Posterior cingulate gyrus (tissue), 11 donors: ENCODE measurements at regions of chr6 and their contacts with region 1.

Region 1: GRCh38 chr6:44246663-44247337 is at the start of gene HSP90AB1:
- DNase-seq: peak; percentile 91 to 99 (median 93)

Region 2: DNA sequence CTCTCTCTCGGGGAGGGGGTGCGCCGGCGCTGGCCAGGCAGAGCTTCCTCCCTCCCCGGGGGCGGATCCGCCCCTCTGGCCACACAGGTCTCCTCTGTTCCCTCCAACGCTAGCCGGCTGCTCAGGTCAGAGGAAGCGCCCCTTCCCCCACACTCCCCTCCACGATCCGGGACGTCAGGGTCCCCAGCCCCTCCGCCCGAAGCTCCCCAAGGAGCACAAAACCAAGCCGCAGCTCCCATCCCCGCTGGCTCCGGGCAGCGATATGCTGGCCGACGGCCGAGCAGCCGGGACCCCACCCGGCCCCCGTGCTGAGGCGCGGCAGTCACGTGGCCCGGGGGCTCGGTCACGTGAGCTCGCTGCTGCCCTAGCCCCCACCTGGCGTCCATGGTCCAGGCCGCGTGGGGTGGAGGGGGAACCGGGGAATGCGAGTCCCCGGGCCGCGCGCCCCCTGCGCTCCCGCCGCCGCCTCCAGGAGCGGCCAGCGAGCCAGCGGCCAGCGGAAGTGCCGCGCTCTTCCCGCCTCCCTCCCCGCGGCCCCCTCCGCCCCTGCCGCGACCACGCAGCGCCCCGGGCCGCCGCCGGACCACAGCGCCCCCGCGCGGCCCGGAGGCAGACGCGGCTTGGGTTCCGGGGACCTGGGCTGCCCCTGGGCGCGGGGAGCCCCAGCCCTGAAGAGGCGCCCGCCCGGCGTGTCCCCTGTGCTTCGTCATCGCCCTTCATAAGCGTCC is 10.4 kb after region 1 on chr6 and contains the start of gene SLC35B2:
- intact Hi-C with region 1: loop called (anchors 1 kb)
- DNase-seq: peak; percentile 79 to 98 (median 86)